ENCODE measurements at regions of chr11 and their contacts with region 1.

Region 1: GRCh38 chr11:117946842-117947526 is 17.8 kb upstream of the TMPRSS13 start:
- DNase-seq: peak; percentile 94
- H3K4me3 Mint-ChIP-seq: no peak overlapping the region
- H3K27ac Mint-ChIP-seq: no peak overlapping the region
- H3K4me1 Mint-ChIP-seq: peaks cover 3% of the 10 kb centered on the region
- H3K27me3 Mint-ChIP-seq: peaks cover 29% of the 10 kb centered on the region
- CTCF ChIP-seq: peak; percentile 91

Region 2: GRCh38 chr11:117807482-117808327 is 139.3 kb before region 1 on chr11:
- CTCF ChIA-PET with region 1: interaction called, 26 read pairs
- POLR2A ChIA-PET with region 1: no interaction called
- intact Hi-C with region 1: loop called (anchors 1 kb)
- DNase-seq: peak; percentile 59
- H3K4me3 Mint-ChIP-seq: no peak overlapping the region
- H3K27ac Mint-ChIP-seq: no peak overlapping the region
- H3K4me1 Mint-ChIP-seq: no peaks in the 10 kb centered on the region
- H3K27me3 Mint-ChIP-seq: peaks cover 32% of the 10 kb centered on the region
- CTCF ChIP-seq: peak; percentile 87

Region 3: GRCh38 chr11:117823294-117823945 is 123.6 kb before region 1 on chr11:
- CTCF ChIA-PET with region 1: interaction called, 26 read pairs
- POLR2A ChIA-PET with region 1: no interaction called
- intact Hi-C with region 1: loop called (anchors 1 kb)
- DNase-seq: no peak
- H3K4me3 Mint-ChIP-seq: no peak overlapping the region
- H3K27ac Mint-ChIP-seq: no peak overlapping the region
- H3K4me1 Mint-ChIP-seq: peaks cover 9% of the 10 kb centered on the region
- H3K27me3 Mint-ChIP-seq: no peaks in the 10 kb centered on the region
- CTCF ChIP-seq: no peak

Region 4: DNA sequence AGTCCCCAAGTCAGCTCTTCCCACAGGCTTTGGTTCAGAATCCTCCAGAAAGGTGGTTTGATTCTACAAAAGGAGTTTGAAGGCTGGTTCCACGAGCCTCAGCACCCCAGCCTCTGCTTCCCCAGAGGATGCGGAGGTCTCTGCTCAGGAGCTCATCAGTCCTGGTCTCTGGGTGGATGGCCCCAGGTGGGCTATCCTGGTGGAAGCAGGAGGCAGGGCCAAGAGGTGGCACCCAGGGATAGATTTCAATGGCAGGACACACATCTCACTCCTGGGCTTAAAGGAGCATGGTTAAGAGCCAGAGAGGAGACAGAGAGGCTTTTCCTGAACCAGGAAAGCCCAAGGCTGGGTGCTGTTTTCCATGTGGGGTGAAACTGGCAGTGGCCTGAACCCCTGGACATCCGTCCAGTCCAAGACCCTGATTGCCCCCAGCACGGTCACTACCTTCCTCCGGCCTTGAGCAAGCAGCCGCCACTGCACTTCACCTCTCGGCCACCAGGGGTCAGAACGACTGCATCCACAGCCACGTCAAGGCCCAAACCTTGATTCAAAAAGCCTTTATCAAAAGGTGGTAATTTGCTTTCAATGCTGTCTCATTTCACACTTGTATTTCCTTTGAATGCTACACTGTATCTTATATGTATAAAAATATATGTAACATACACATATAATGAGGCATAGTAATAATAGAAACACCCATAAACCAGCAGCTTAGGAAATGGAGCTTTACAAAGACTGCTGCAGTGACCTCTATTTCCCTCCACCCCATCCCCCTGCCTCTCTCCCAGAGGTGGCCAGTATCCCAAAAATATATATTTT is 103.1 kb before region 1 on chr11:
- CTCF ChIA-PET with region 1: interaction called, 200 read pairs
- POLR2A ChIA-PET with region 1: interaction called, 8 read pairs
- intact Hi-C with region 1: loop called (anchors 1 kb)
- DNase-seq: peak; percentile 63
- H3K4me3 Mint-ChIP-seq: no peak overlapping the region
- H3K27ac Mint-ChIP-seq: no peak overlapping the region
- H3K4me1 Mint-ChIP-seq: no peaks in the 10 kb centered on the region
- H3K27me3 Mint-ChIP-seq: peaks cover 2% of the 10 kb centered on the region
- CTCF ChIP-seq: peak; percentile 97

Region 5: GRCh38 chr11:117914991-117915618 is 31.9 kb before region 1 on chr11:
- CTCF ChIA-PET with region 1: interaction called, 14 read pairs
- POLR2A ChIA-PET with region 1: no interaction called
- intact Hi-C with region 1: no loop called
- DNase-seq: no peak
- H3K4me3 Mint-ChIP-seq: no peak overlapping the region
- H3K27ac Mint-ChIP-seq: no peak overlapping the region
- H3K4me1 Mint-ChIP-seq: no peaks in the 10 kb centered on the region
- H3K27me3 Mint-ChIP-seq: peaks cover 24% of the 10 kb centered on the region
- CTCF ChIP-seq: no peak

Region 6: GRCh38 chr11:118051611-118052461 is 104.9 kb after region 1 on chr11:
- CTCF ChIA-PET with region 1: interaction called, 22 read pairs
- POLR2A ChIA-PET with region 1: no interaction called
- intact Hi-C with region 1: loop called (anchors 1 kb)
- DNase-seq: no peak
- H3K4me3 Mint-ChIP-seq: no peak overlapping the region
- H3K27ac Mint-ChIP-seq: no peak overlapping the region
- H3K4me1 Mint-ChIP-seq: no peaks in the 10 kb centered on the region
- H3K27me3 Mint-ChIP-seq: peaks cover 30% of the 10 kb centered on the region
- CTCF ChIP-seq: no peak

Region 7: GRCh38 chr11:118152552-118153471 is 205.8 kb after region 1 on chr11 and contains the start of gene SCN4B:
- CTCF ChIA-PET with region 1: no interaction called
- POLR2A ChIA-PET with region 1: no interaction called
- intact Hi-C with region 1: no loop called
- DNase-seq: peak; percentile 50
- H3K4me3 Mint-ChIP-seq: peak within 1 kb of the TSS; percentile 47
- H3K27ac Mint-ChIP-seq: no peak within 1 kb of the TSS
- H3K4me1 Mint-ChIP-seq: peaks cover 8% of the 10 kb centered on the region
- H3K27me3 Mint-ChIP-seq: peaks cover 43% of the 10 kb centered on the region
- CTCF ChIP-seq: no peak
- total RNA-seq, gene SCN4B: 0.32 TPM in 1 of 2 replicates, not detected in the other

Measured in MCF 10A (cell line).